Activated B cell treated with CpG ODN at 0.5 μM for 24 hours (primary cell): ENCODE measurements at regions of chr2 and their contacts with region 1.

Region 1: GRCh38 chr2:18560031-18560796 is at the start of gene RDH14:
- DNase-seq: peak; percentile 91
- ATAC-seq: peak; percentile 92
- H3K4me3 Mint-ChIP-seq: peak within 1 kb of the TSS; percentile 92
- H3K27ac Mint-ChIP-seq: peak within 1 kb of the TSS; percentile 91
- H3K4me1 Mint-ChIP-seq: peaks cover 32% of the 10 kb centered on the region
- H3K27me3 Mint-ChIP-seq: no peaks in the 10 kb centered on the region
- CTCF ChIP-seq: no peak
- total RNA-seq, gene RDH14: 18.7 and 19.6 TPM in 2 replicates

Region 2: DNA sequence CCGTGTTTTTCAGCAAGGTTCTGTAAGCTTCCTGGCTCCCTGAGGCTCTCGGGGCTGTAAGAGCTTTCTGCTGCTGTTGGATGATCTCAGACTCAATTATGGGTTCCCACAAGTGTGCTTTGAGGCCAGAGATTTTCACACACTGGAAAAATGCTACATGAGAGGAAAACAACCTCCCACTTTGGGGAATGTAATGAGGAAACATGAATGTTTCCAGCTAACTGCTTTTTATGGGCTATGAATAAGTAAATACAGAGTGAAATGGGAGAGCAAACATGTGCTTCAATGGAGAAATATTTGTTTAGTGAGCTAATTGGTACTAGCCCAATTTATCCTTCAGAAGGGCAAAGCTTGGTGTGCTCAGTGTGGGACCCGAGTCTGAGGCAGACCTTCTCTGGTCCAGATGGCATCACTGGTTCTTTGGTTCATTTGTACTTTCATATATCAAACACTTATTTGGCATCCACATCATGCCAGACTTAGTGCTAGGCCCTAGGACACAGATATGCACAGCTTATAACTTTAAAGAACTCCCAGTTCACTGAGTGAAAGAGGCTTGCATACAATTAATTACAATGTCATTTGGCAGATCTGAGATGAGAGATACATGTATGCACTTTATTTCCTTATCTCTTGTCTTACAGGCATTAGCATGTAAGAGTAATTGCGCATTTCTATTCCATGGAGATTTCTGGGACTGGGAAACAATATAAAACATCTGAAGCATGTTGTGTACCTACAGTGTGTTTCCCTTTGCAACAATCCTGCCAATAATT is 248.6 kb before region 1 on chr2:
- CTCF ChIA-PET with region 1: no interaction called
- POLR2A ChIA-PET with region 1: no interaction called
- intact Hi-C with region 1: no loop called
- DNase-seq: no peak
- ATAC-seq: no peak
- H3K4me3 Mint-ChIP-seq: no peak overlapping the region
- H3K27ac Mint-ChIP-seq: no peak overlapping the region
- H3K4me1 Mint-ChIP-seq: no peaks in the 10 kb centered on the region
- H3K27me3 Mint-ChIP-seq: no peaks in the 10 kb centered on the region
- CTCF ChIP-seq: no peak

Region 3: DNA sequence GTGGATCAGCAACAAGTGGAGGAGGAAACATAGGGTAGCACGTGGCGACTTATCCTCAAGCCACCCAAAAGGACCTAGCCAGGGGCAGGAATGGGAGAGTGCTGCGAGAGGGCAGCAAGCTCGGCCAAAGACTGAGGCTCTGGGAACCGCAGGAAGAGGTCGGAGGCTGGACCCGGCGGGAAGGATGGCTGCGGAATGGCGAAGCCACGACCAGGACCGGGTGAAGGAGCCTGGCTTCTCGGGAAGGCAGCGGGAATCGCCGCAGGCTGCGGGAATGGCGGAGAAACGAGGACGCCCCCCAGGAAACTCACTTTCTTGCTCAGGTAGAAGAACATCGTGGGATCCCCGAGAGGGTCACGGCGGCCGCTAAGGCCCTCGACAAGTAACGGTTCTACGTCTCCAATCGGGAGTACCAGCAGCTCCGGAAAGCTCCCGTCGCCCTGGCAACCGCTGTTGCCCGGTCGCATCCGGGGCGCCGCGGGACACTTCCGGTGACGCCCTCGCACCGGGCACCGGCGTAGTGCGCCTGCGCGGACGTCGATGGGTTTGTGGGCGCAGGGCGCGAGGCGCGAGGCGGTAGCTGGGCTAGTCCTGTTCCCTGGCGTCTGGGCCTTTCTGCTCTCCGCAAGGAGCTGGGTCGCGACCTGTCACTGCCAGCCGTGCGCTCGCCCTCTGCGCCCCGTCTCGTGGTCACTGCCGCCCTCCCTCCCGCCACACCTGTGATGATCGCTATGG is 1429.6 kb after region 1 on chr2 and contains the start of gene WDR35:
- CTCF ChIA-PET with region 1: no interaction called
- POLR2A ChIA-PET with region 1: no interaction called
- intact Hi-C with region 1: loop called (anchors 2 kb)
- DNase-seq: peak; percentile 93
- ATAC-seq: peak; percentile 89
- H3K4me3 Mint-ChIP-seq: peak within 1 kb of the TSS; percentile 91
- H3K27ac Mint-ChIP-seq: peak within 1 kb of the TSS; percentile 85
- H3K4me1 Mint-ChIP-seq: peaks cover 31% of the 10 kb centered on the region
- H3K27me3 Mint-ChIP-seq: peaks cover 18% of the 10 kb centered on the region
- CTCF ChIP-seq: no peak
- total RNA-seq, gene WDR35: 8.1 and 8.2 TPM in 2 replicates